CD8-positive, alpha-beta memory T cell (primary cell): ENCODE measurements at regions of chr13 and their contacts with region 1.

Region 1: GRCh38 chr13:40974460-40975407 is 44.4 kb downstream of the ELF1 start:
- DNase-seq: peak in 4 of 5 donors; percentile 29 to 60 (median 53)
- H3K4me3 ChIP-seq: peak overlapping the region; percentile 17
- H3K4me3 Mint-ChIP-seq: peak overlapping the region; percentile 42 to 96 (median 74)
- H3K27ac ChIP-seq: no peak overlapping the region
- H3K27ac Mint-ChIP-seq: peak overlapping the region; percentile 76 to 94 (median 86)
- H3K4me1 ChIP-seq: peaks cover 86% of the 10 kb centered on the region
- H3K4me1 Mint-ChIP-seq: peaks cover 90 to 97% (median 95%) of the 10 kb centered on the region in 3 donors
- H3K27me3 ChIP-seq: no peaks in the 10 kb centered on the region
- H3K27me3 Mint-ChIP-seq: no peaks in the 10 kb centered on the region

Region 2: GRCh38 chr13:40922437-40923040 is 52.2 kb before region 1 on chr13:
- CTCF ChIA-PET with region 1: interaction called, 10 read pairs
- POLR2A ChIA-PET with region 1: no interaction called
- DNase-seq: no peak
- H3K4me3 ChIP-seq: no peak overlapping the region
- H3K4me3 Mint-ChIP-seq: peak overlapping the region; percentile 54 to 84 (median 72)
- H3K27ac ChIP-seq: no peak overlapping the region
- H3K27ac Mint-ChIP-seq: peak overlapping the region in 6 of 8 donors; percentile 47 to 87 (median 76)
- H3K4me1 ChIP-seq: peaks cover 7% of the 10 kb centered on the region
- H3K4me1 Mint-ChIP-seq: peaks cover 21 to 35% (median 31%) of the 10 kb centered on the region in 3 donors
- H3K27me3 ChIP-seq: no peaks in the 10 kb centered on the region
- H3K27me3 Mint-ChIP-seq: no peaks in the 10 kb centered on the region

Region 3: GRCh38 chr13:40984668-40985366 is 10.1 kb after region 1 on chr13:
- CTCF ChIA-PET with region 1: interaction called, 12 read pairs
- POLR2A ChIA-PET with region 1: interaction called, 5 read pairs
- DNase-seq: peak in 2 of 5 donors; percentile 49 to 58
- H3K4me3 ChIP-seq: peak overlapping the region; percentile 63
- H3K4me3 Mint-ChIP-seq: peak overlapping the region; percentile 84 to 96 (median 88)
- H3K27ac ChIP-seq: peak overlapping the region; percentile 40
- H3K27ac Mint-ChIP-seq: peak overlapping the region; percentile 91 to 99 (median 96)
- H3K4me1 ChIP-seq: peaks cover 53% of the 10 kb centered on the region
- H3K4me1 Mint-ChIP-seq: peaks cover 56 to 74% (median 61%) of the 10 kb centered on the region in 3 donors
- H3K27me3 ChIP-seq: no peaks in the 10 kb centered on the region
- H3K27me3 Mint-ChIP-seq: peaks cover 0 to 2% of the 10 kb centered on the region in 2 donors

Region 4: DNA sequence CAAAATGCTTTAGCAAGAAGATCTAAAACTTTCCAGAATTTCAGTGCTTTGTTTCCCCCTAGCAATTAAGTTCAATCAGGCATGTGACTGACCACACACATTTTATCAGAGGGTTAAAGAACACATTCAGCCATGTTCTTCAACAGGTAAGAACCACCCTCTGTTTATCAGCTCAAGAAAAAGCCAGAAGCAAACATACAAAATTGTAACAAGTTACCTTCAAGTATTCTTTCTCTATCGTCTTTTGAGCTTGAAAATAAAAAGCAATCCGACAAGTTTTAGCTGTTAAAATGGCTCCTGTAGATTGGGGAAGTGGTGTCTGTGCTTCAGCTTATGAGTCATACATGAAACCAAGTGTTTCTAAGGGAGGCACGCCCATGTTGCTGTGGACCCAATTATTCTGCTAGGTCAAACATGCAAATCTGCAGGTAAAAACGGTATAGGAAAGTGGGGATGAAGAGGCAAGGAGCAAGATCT is 44.3 kb after region 1 on chr13 and contains the start of gene ELF1:
- CTCF ChIA-PET with region 1: interaction called, 22 read pairs
- POLR2A ChIA-PET with region 1: interaction called, 5 read pairs
- DNase-seq: peak; percentile 38 to 78 (median 72)
- H3K4me3 ChIP-seq: peak within 1 kb of the TSS; percentile 66
- H3K4me3 Mint-ChIP-seq: peak within 1 kb of the TSS; percentile 89 to 95 (median 92)
- H3K27ac ChIP-seq: peak within 1 kb of the TSS; percentile 91
- H3K27ac Mint-ChIP-seq: peak within 1 kb of the TSS; percentile 84 to 99 (median 97)
- H3K4me1 ChIP-seq: peaks cover 31% of the 10 kb centered on the region
- H3K4me1 Mint-ChIP-seq: peaks cover 37 to 61% (median 49%) of the 10 kb centered on the region in 3 donors
- H3K27me3 ChIP-seq: no peaks in the 10 kb centered on the region
- H3K27me3 Mint-ChIP-seq: no peaks in the 10 kb centered on the region
- total RNA-seq, gene ELF1: 76.8 to 77.6 TPM

Region 5: DNA sequence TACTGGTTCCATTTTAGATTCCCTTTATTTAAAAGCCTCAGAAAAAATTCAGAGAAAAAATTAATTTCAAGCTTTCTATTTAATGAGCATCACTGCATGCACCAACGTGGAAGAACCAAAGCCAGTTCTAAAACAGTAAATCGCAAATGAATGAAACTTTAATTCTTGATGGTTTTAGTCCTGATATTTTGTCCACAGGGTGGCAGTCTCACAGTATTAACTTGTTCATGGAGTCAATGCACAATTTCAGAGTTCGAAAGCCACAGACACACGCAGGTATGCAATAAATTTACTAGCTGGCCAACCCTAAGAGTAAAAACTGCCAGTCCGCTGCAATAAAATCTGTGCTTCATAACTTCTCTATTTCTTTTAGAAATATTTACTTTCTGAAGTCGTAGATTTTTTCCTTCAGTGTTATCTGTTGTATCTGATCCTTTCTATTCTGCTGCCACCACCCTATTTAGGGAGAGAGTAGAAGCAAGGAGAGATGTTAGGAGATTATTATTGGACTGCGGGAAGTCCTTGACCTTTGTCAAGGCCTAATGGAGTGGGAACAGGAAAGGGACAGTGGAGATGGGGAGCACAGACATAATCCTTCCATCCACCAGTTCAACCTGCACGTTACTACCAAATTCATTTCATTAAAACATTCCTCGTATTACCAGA is 79.6 kb after region 1 on chr13:
- CTCF ChIA-PET with region 1: interaction called, 23 read pairs
- POLR2A ChIA-PET with region 1: interaction called, 3 read pairs
- DNase-seq: peak in 4 of 5 donors; percentile 6 to 59 (median 46)
- H3K4me3 ChIP-seq: no peak overlapping the region
- H3K4me3 Mint-ChIP-seq: peak overlapping the region in 1 of 7 donors; percentile 11
- H3K27ac ChIP-seq: no peak overlapping the region
- H3K27ac Mint-ChIP-seq: peak overlapping the region in 6 of 8 donors; percentile 3 to 69 (median 42)
- H3K4me1 ChIP-seq: peaks cover 21% of the 10 kb centered on the region
- H3K4me1 Mint-ChIP-seq: peaks cover 32 to 51% (median 48%) of the 10 kb centered on the region in 3 donors
- H3K27me3 ChIP-seq: no peaks in the 10 kb centered on the region
- H3K27me3 Mint-ChIP-seq: no peaks in the 10 kb centered on the region

Region 6: GRCh38 chr13:41061075-41061913 is 86.6 kb after region 1 on chr13 and contains the start of gene WBP4:
- CTCF ChIA-PET with region 1: interaction called, 23 read pairs
- POLR2A ChIA-PET with region 1: interaction called, 6 read pairs
- DNase-seq: peak; percentile 76 to 93 (median 88)
- H3K4me3 ChIP-seq: peak within 1 kb of the TSS; percentile 98
- H3K4me3 Mint-ChIP-seq: peak within 1 kb of the TSS; percentile 97 to 100 (median 100)
- H3K27ac ChIP-seq: peak within 1 kb of the TSS; percentile 88
- H3K27ac Mint-ChIP-seq: peak within 1 kb of the TSS; percentile 98 to 100 (median 99)
- H3K4me1 ChIP-seq: peaks cover 24% of the 10 kb centered on the region
- H3K4me1 Mint-ChIP-seq: peaks cover 40 to 67% (median 52%) of the 10 kb centered on the region in 3 donors
- H3K27me3 ChIP-seq: no peaks in the 10 kb centered on the region
- H3K27me3 Mint-ChIP-seq: peaks cover 0 to 14% of the 10 kb centered on the region in 2 donors
- total RNA-seq, gene WBP4: 15.5 to 15.8 TPM

Region 7: DNA sequence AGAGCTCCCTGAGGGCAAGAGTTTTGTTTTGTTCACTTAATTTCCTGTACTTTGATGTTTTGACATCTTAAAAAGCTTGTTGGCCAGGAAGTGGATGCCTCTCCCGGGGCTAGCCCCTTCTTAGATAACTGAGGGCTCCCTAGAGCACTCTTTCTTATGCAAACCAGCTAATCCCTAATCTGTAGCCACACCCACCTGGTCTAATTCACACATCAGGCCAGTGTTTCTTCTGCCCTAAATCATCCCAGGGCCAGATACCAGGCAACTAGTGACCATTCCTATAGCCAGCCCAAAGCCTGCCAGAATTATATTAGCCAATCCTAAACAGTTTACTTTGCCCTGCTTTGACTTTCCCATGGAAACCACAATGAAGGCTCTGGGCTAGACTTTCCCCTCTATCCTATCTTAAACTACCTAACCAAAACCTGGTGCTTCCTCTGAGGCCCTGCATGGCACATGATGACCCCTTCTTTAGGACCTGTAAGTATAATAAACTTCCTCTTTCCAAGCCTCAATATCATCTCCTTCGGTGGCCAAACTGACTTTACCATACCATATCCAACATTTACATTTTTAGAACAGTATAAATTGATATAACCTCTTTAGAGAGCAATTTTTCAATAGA is 111.3 kb after region 1 on chr13:
- CTCF ChIA-PET with region 1: no interaction called
- POLR2A ChIA-PET with region 1: no interaction called
- DNase-seq: no peak
- H3K4me3 ChIP-seq: no peak overlapping the region
- H3K4me3 Mint-ChIP-seq: no peak overlapping the region
- H3K27ac ChIP-seq: no peak overlapping the region
- H3K27ac Mint-ChIP-seq: peak overlapping the region in 5 of 8 donors; percentile 12 to 64 (median 31)
- H3K4me1 ChIP-seq: no peaks in the 10 kb centered on the region
- H3K4me1 Mint-ChIP-seq: peaks cover 0 to 6% (median 6%) of the 10 kb centered on the region in 3 donors
- H3K27me3 ChIP-seq: no peaks in the 10 kb centered on the region
- H3K27me3 Mint-ChIP-seq: no peaks in the 10 kb centered on the region